Naive thymus-derived CD4-positive, alpha-beta T cell (primary cell): ENCODE measurements at regions of chr17 and their contacts with region 1.

Region 1: DNA sequence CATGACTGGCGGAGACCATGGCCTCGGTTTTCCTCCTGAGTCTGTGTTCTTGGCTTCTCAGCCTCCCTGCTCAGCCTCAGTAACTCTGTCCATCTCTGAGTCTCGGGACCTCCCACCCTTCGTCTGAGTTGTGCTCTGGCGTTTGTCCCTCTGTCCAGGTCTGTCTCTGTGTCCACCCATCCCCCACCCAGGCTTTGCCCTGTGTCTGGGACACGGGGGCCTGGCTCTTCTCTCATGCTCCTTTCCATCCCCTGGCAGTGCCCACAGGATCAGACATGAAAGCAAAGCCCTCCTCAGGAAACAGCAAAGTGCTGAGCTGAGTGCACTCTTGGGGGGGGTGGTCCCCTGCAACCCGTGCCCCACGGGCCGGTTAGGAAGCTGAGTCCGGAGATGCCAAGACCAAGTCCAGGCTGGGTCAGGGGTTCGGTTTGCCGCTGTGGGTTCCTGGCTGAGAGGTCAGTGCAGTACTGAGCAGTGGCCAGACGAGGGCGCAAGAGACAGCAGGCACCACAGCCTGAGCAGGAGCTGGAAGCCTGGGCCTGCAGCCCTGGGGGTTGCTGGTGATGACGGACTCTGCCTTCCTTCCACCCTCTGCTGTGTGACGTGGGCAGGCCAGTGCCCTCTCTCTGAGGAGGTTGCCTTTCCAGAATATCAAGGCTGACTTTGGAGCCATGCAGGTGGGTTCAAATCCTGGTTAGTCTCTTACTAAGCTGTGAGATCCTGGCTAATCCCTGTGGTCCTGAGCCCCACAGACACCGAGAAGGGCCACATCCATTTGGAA is 2.5 kb downstream of the P2RX1 start:
- DNase-seq: peak; percentile 65 to 85 (median 76)
- ATAC-seq: peak; percentile 78
- H3K4me3 ChIP-seq: no peak overlapping the region
- H3K4me3 Mint-ChIP-seq: peak overlapping the region in 2 of 10 donors; percentile 23 to 77
- H3K27ac ChIP-seq: no peak overlapping the region
- H3K27ac Mint-ChIP-seq: peak overlapping the region; percentile 31 to 86 (median 76)
- H3K4me1 ChIP-seq: peaks cover 27 to 38% of the 10 kb centered on the region in 2 donors
- H3K4me1 Mint-ChIP-seq: peaks cover 26 to 64% (median 47%) of the 10 kb centered on the region in 7 donors
- H3K27me3 ChIP-seq: no peaks in the 10 kb centered on the region
- H3K27me3 Mint-ChIP-seq: no peaks in the 10 kb centered on the region

Region 2: GRCh38 chr17:3893003-3893719 is 20.6 kb before region 1 on chr17 and contains the start of gene CAMKK1:
- CTCF ChIA-PET with region 1: interaction called, 4 read pairs
- POLR2A ChIA-PET with region 1: no interaction called
- intact Hi-C with region 1: loop called (anchors 1 to 2 kb)
- DNase-seq: peak; percentile 71 to 96 (median 85)
- ATAC-seq: peak; percentile 87
- H3K4me3 ChIP-seq: peak within 1 kb of the TSS; percentile 70
- H3K4me3 Mint-ChIP-seq: peak within 1 kb of the TSS; percentile 81 to 90 (median 86)
- H3K27ac ChIP-seq: peak within 1 kb of the TSS; percentile 77
- H3K27ac Mint-ChIP-seq: peak within 1 kb of the TSS; percentile 73 to 93 (median 88)
- H3K4me1 ChIP-seq: peaks cover 11 to 23% of the 10 kb centered on the region in 2 donors
- H3K4me1 Mint-ChIP-seq: peaks cover 23 to 45% (median 35%) of the 10 kb centered on the region in 7 donors
- H3K27me3 ChIP-seq: no peaks in the 10 kb centered on the region
- H3K27me3 Mint-ChIP-seq: peaks cover 0 to 7% (median 0%) of the 10 kb centered on the region in 5 donors
- total RNA-seq, gene CAMKK1: 4.8 to 12.5 (median 6.3) TPM

Region 3: GRCh38 chr17:4004517-4005295 is 91.0 kb after region 1 on chr17:
- CTCF ChIA-PET with region 1: interaction called, 21 read pairs
- POLR2A ChIA-PET with region 1: interaction called, 4 read pairs
- intact Hi-C with region 1: loop called (anchors 1 kb)
- DNase-seq: peak; percentile 32 to 80 (median 64)
- ATAC-seq: peak; percentile 68
- H3K4me3 ChIP-seq: no peak overlapping the region
- H3K4me3 Mint-ChIP-seq: no peak overlapping the region
- H3K27ac ChIP-seq: no peak overlapping the region
- H3K27ac Mint-ChIP-seq: peak overlapping the region in 2 of 9 donors; percentile 65
- H3K4me1 ChIP-seq: peaks cover 0 to 7% of the 10 kb centered on the region in 2 donors
- H3K4me1 Mint-ChIP-seq: peaks cover 4 to 17% (median 7%) of the 10 kb centered on the region in 7 donors
- H3K27me3 ChIP-seq: no peaks in the 10 kb centered on the region
- H3K27me3 Mint-ChIP-seq: no peaks in the 10 kb centered on the region

Region 4: DNA sequence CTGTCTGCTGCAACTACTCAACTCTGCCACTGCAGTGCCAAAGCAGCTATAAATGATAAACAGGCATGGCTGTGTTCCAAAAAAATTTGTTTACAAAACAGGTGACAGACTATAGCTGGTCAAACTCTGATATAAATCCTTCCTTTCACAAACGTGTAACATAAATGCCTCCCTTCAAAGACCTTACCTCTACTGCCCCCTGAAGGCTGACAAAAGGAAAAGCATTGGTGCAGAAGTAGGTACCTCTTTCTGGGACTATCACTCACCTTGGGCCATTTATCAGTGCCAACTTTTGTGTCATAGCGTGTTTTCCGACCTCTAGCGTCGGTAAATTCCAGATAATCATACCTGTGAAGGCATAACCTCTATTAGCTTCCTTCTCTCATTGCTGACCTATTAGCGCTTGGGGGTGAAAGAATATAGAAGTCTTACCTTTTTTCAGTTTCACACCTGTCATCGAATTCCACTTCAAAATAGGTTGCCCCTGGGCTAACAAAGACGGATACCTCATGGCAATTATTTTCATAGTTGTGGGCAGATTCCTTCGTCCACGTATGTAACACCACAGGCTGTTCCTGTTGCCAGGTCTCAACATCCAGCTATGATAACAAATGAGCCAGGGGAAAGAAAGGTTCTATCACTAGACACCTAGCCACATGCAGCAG is 161.2 kb after region 1 on chr17:
- CTCF ChIA-PET with region 1: interaction called, 10 read pairs
- POLR2A ChIA-PET with region 1: no interaction called
- intact Hi-C with region 1: loop called (anchors 1 to 2 kb)
- DNase-seq: peak in 7 of 9 donors; percentile 9 to 56 (median 42)
- ATAC-seq: peak; percentile 75
- H3K4me3 ChIP-seq: no peak overlapping the region
- H3K4me3 Mint-ChIP-seq: no peak overlapping the region
- H3K27ac ChIP-seq: no peak overlapping the region
- H3K27ac Mint-ChIP-seq: peak overlapping the region in 2 of 9 donors; percentile 39 to 41
- H3K4me1 ChIP-seq: no peaks in the 10 kb centered on the region
- H3K4me1 Mint-ChIP-seq: no peaks in the 10 kb centered on the region
- H3K27me3 ChIP-seq: no peaks in the 10 kb centered on the region
- H3K27me3 Mint-ChIP-seq: no peaks in the 10 kb centered on the region